HepG2 (cell line): ENCODE measurements at regions of chr17 and their contacts with region 1.

Region 1: DNA sequence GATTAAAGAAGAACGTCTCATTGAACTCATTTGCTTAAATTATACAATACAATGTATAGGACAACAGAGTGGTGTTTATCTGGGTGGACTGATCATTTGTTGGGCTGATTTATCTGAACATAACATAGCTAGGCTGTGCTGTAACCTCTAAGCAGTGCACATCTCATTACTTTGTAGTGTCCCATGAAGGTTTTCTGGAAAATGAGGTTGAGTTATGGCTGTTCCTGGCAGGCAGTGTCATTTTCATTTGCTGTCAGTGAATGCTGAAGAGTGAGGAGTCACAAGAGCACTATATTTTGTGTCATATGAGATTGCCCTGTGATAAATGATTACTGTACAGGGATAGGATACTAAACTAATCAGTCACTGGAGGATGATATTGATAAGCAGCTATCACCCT is 340.2 kb downstream of the HS3ST3B1 start:
- DNase-seq: no peak
- ATAC-seq: no peak
- H3K4me3 ChIP-seq: no peak overlapping the region
- H3K27ac ChIP-seq: no peak overlapping the region
- H3K4me1 ChIP-seq: peaks cover 3% of the 10 kb centered on the region
- H3K27me3 ChIP-seq: no peaks in the 10 kb centered on the region
- CTCF ChIP-seq: no peak
- EP300 ChIP-seq: no peak
- POLR2A ChIP-seq: no peak
- RAD21 ChIP-seq: no peak

Region 2: GRCh38 chr17:14619821-14620220 is 21.3 kb before region 1 on chr17:
- CTCF ChIA-PET with region 1: no interaction called
- POLR2A ChIA-PET with region 1: no interaction called
- in situ Hi-C with region 1: no loop called
- intact Hi-C with region 1: loop called (anchors 1 kb)
- DNase-seq: no peak
- ATAC-seq: no peak
- H3K4me3 ChIP-seq: no peak overlapping the region
- H3K27ac ChIP-seq: no peak overlapping the region
- H3K4me1 ChIP-seq: no peaks in the 10 kb centered on the region
- H3K27me3 ChIP-seq: no peaks in the 10 kb centered on the region
- CTCF ChIP-seq: no peak
- EP300 ChIP-seq: no peak
- POLR2A ChIP-seq: no peak
- RAD21 ChIP-seq: no peak

Region 3: GRCh38 chr17:14826358-14826757 is 185.2 kb after region 1 on chr17:
- CTCF ChIA-PET with region 1: no interaction called
- POLR2A ChIA-PET with region 1: no interaction called
- in situ Hi-C with region 1: no loop called
- intact Hi-C with region 1: loop called (anchors 5 kb)
- DNase-seq: no peak
- ATAC-seq: no peak
- H3K4me3 ChIP-seq: no peak overlapping the region
- H3K27ac ChIP-seq: no peak overlapping the region
- H3K4me1 ChIP-seq: no peaks in the 10 kb centered on the region
- H3K27me3 ChIP-seq: no peaks in the 10 kb centered on the region; a peak in 1 of 5 replicates
- CTCF ChIP-seq: no peak
- EP300 ChIP-seq: no peak
- POLR2A ChIP-seq: no peak
- RAD21 ChIP-seq: no peak